Naive thymus-derived CD4-positive, alpha-beta T cell (primary cell): ENCODE measurements at regions of chr7 and their contacts with region 1.

Region 1: GRCh38 chr7:150514748-150515222 is at the start of gene GIMAP7:
- DNase-seq: peak; percentile 38 to 90 (median 82)
- ATAC-seq: peak; percentile 86
- H3K4me3 ChIP-seq: peak within 1 kb of the TSS; percentile 94
- H3K4me3 Mint-ChIP-seq: peak within 1 kb of the TSS; percentile 93 to 100 (median 99)
- H3K27ac ChIP-seq: peak within 1 kb of the TSS; percentile 84
- H3K27ac Mint-ChIP-seq: peak within 1 kb of the TSS; percentile 94 to 99 (median 98)
- H3K4me1 ChIP-seq: peaks cover 45% of the 10 kb centered on the region in 2 donors
- H3K4me1 Mint-ChIP-seq: peaks cover 38 to 48% (median 46%) of the 10 kb centered on the region in 7 donors
- H3K27me3 ChIP-seq: no peaks in the 10 kb centered on the region
- H3K27me3 Mint-ChIP-seq: no peaks in the 10 kb centered on the region
- total RNA-seq, gene GIMAP7: 66.3 to 555 (median 321) TPM

Region 2: DNA sequence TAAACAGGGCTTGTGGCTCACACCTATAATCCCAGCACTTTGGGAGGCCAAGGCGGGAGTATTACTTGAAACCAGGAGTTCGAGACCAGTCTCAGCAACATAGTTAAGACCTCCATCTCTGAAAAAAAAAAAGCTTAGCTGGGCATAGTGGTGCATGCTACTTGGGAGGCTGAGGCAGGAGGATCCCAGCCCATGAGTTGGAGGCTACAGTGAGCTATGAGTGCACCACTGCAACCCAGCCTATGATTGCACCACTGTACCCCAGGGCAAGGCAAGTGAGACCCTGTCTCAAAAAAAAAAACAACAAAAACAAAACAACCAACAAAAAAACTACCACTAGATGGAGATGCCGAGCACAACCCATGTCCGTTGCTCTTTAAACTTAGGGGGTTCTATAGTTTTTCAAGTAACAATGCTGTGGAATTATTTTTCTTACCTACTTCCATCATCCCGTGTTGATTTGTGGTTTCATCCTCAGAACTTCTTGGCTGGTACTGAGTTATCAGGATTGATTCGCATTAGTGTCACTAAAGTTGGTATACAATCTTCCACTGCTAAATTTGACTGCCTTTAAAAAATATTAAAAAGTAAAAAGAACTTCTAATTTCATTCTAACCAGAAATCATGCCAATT is 158.4 kb before region 1 on chr7:
- CTCF ChIA-PET with region 1: no interaction called
- POLR2A ChIA-PET with region 1: interaction called, 3 read pairs
- intact Hi-C with region 1: loop called (anchors 5 kb)
- DNase-seq: peak in 7 of 9 donors; percentile 32 to 59 (median 53)
- ATAC-seq: peak; percentile 59
- H3K4me3 ChIP-seq: no peak overlapping the region
- H3K4me3 Mint-ChIP-seq: peak overlapping the region in 4 of 10 donors; percentile 12 to 32 (median 22)
- H3K27ac ChIP-seq: peak overlapping the region; percentile 51
- H3K27ac Mint-ChIP-seq: peak overlapping the region in 6 of 9 donors; percentile 32 to 77 (median 36)
- H3K4me1 ChIP-seq: peaks cover 6 to 28% of the 10 kb centered on the region in 2 donors
- H3K4me1 Mint-ChIP-seq: peaks cover 17 to 43% (median 41%) of the 10 kb centered on the region in 7 donors
- H3K27me3 ChIP-seq: no peaks in the 10 kb centered on the region
- H3K27me3 Mint-ChIP-seq: peaks cover 0 to 10% (median 0%) of the 10 kb centered on the region in 5 donors

Region 3: DNA sequence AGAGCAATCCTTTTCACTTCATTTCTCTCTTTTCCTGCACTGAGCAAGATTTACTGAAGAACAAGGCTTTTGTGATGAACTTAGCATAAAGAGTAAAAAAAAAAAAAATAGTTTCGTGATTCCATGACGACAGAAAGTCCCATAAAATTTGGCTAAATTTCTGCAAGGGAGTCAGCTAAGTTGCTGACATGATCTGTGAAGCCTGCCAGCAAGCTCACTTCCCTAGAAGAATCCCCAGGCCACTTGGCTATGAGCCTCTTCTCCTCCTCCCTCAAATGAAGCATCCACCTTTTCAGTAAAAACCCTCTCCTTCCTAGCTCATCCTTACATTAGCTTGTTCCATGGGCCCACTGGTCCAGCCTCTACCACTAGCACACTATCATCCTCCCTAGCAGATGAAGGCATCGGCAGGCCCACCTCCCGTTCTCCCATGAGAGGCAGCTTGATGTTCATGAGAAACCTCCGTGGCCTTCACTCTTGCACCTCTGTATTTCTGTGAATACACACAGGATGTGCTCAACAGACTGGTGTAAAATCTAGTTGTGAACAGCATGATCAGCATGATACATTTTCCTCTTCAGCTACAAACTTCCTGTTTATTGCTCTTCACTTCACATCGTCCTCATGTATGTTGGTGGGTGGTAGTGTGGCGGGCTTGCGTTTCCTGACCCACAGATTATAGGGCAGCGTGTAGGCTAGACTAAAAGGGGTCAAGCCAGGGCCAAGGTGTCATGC is 33.4 kb before region 1 on chr7:
- CTCF ChIA-PET with region 1: interaction called, 7 read pairs
- POLR2A ChIA-PET with region 1: interaction called, 637 read pairs
- intact Hi-C with region 1: loop called (anchors 1 kb)
- DNase-seq: peak in 8 of 9 donors; percentile 46 to 81 (median 71)
- ATAC-seq: peak; percentile 68
- H3K4me3 ChIP-seq: peak overlapping the region; percentile 12
- H3K4me3 Mint-ChIP-seq: peak overlapping the region; percentile 79 to 97 (median 90)
- H3K27ac ChIP-seq: peak overlapping the region; percentile 95
- H3K27ac Mint-ChIP-seq: peak overlapping the region; percentile 97 to 100 (median 100)
- H3K4me1 ChIP-seq: peaks cover 84 to 89% of the 10 kb centered on the region in 2 donors
- H3K4me1 Mint-ChIP-seq: peaks cover 58 to 99% (median 92%) of the 10 kb centered on the region in 7 donors
- H3K27me3 ChIP-seq: no peaks in the 10 kb centered on the region
- H3K27me3 Mint-ChIP-seq: no peaks in the 10 kb centered on the region

Region 4: DNA sequence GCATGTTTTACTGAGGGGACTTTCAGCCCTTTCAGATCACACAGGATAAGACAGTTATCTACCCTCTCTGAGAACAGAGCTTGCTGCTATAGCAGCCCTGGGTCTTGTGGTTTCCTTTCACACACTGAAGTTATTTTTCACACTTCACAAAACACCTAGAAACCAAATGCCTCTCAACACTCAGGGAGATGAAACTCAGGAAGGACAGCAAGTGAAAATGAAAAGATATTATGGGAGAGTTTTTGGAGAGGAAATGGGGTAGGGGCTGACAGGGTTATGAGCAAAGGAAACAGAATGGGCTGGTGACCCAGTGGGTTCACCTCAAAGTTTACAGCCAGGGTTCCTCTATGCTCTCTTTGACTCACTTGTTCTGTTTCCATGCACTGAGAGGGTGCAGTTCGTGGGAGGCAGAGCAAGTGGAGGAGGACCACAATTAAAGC is 153.7 kb after region 1 on chr7:
- CTCF ChIA-PET with region 1: no interaction called
- POLR2A ChIA-PET with region 1: interaction called, 11 read pairs
- intact Hi-C with region 1: loop called in 1 of 2 experiments (anchors 1 kb)
- DNase-seq: peak in 8 of 9 donors; percentile 66 to 87 (median 81)
- ATAC-seq: peak; percentile 88
- H3K4me3 ChIP-seq: peak overlapping the region; percentile 30
- H3K4me3 Mint-ChIP-seq: peak overlapping the region; percentile 57 to 85 (median 72)
- H3K27ac ChIP-seq: peak overlapping the region; percentile 78
- H3K27ac Mint-ChIP-seq: peak overlapping the region; percentile 73 to 100 (median 97)
- H3K4me1 ChIP-seq: peaks cover 71 to 86% of the 10 kb centered on the region in 2 donors
- H3K4me1 Mint-ChIP-seq: peaks cover 58 to 99% (median 94%) of the 10 kb centered on the region in 7 donors
- H3K27me3 ChIP-seq: no peaks in the 10 kb centered on the region
- H3K27me3 Mint-ChIP-seq: no peaks in the 10 kb centered on the region

Region 5: DNA sequence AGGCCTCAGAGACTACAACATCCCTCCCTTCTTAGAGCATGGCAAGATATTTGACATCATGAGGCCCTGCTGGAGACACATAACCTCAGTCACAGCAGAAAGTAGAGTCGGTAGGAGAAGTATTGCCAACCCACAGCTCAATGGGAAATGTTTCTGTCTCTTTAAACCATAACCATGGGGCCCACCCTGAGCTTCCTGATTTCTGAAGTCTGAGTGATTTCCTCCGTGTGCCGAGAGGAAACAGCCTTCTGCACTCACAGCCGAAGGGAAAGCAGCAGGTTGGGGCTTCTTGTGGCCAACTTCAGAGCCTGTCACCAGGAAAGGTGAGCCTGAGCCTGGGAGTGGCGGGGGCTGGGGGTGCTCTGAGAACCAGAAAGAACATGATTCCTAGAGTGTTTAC is 201.6 kb after region 1 on chr7 and contains the start of gene GIMAP1:
- CTCF ChIA-PET with region 1: interaction called, 3 read pairs
- POLR2A ChIA-PET with region 1: interaction called, 122 read pairs
- intact Hi-C with region 1: loop called in 1 of 2 experiments (anchors 2 kb)
- DNase-seq: peak in 8 of 9 donors; percentile 14 to 85 (median 81)
- ATAC-seq: peak; percentile 90
- H3K4me3 ChIP-seq: peak within 1 kb of the TSS; percentile 88
- H3K4me3 Mint-ChIP-seq: peak within 1 kb of the TSS; percentile 89 to 100 (median 98)
- H3K27ac ChIP-seq: peak within 1 kb of the TSS; percentile 86
- H3K27ac Mint-ChIP-seq: peak within 1 kb of the TSS; percentile 76 to 98 (median 95)
- H3K4me1 ChIP-seq: peaks cover 39 to 46% of the 10 kb centered on the region in 2 donors
- H3K4me1 Mint-ChIP-seq: peaks cover 38 to 77% (median 61%) of the 10 kb centered on the region in 7 donors
- H3K27me3 ChIP-seq: no peaks in the 10 kb centered on the region
- H3K27me3 Mint-ChIP-seq: no peaks in the 10 kb centered on the region
- total RNA-seq, gene GIMAP1: 23.3 to 124 (median 32.6) TPM

Region 6: DNA sequence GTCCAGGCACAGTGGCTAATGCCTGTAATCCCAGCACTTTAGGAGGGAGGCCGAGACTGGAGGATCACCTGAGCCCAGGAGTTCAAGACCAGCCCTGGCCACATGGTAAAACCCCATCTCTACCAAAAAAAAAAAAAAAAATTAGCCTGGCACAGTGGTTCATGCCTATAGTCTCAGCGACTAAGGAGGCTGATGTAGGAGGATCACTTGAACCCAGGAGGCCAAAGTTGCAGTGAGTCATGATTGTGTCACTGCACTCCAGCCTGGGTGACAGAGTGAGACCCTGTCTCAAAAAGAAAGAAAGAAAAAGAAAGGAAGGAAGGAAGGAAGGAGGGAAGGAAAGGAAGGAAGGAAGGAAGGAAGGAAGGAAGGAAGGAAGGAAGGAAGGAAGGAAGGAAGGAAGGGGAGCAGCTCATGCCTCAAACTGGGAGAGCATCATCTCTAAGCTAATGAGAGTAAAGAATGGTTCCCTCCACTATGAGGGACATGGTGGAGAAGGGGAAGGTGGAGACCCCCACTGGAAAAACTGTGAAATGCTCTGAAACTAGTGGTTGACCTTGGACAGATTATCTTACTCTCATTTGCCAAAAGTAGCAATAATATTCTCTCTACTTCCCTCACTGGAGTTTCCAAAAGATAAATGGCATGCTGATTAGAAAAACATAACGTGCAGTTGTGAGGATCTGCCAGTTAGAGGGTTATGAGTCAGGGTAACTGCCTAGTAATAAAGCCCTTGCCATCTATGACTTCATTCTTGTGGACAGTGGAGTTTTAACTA is 239.2 kb after region 1 on chr7:
- CTCF ChIA-PET with region 1: interaction called, 7 read pairs
- POLR2A ChIA-PET with region 1: interaction called, 212 read pairs
- intact Hi-C with region 1: loop called (anchors 1 kb)
- DNase-seq: peak in 1 of 9 donors; percentile 36
- ATAC-seq: no peak
- H3K4me3 ChIP-seq: no peak overlapping the region
- H3K4me3 Mint-ChIP-seq: peak overlapping the region; percentile 30 to 83 (median 68)
- H3K27ac ChIP-seq: peak overlapping the region; percentile 60
- H3K27ac Mint-ChIP-seq: peak overlapping the region; percentile 88 to 97 (median 95)
- H3K4me1 ChIP-seq: peaks cover 44 to 70% of the 10 kb centered on the region in 2 donors
- H3K4me1 Mint-ChIP-seq: peaks cover 36 to 81% (median 78%) of the 10 kb centered on the region in 7 donors
- H3K27me3 ChIP-seq: no peaks in the 10 kb centered on the region
- H3K27me3 Mint-ChIP-seq: peaks cover 0 to 2% (median 0%) of the 10 kb centered on the region in 5 donors